CD8-positive, alpha-beta T cell (primary cell): ENCODE measurements at regions of chr3 and their contacts with region 1.

Region 1: GRCh38 chr3:105459566-105460290 is 93.0 kb downstream of the ALCAM start:
- DNase-seq: no peak
- ATAC-seq: no peak
- H3K4me3 ChIP-seq: no peak overlapping the region
- H3K4me3 Mint-ChIP-seq: no peak overlapping the region
- H3K27ac ChIP-seq: no peak overlapping the region
- H3K27ac Mint-ChIP-seq: no peak overlapping the region
- H3K4me1 ChIP-seq: no peaks in the 10 kb centered on the region
- H3K4me1 Mint-ChIP-seq: no peaks in the 10 kb centered on the region
- H3K27me3 ChIP-seq: no peaks in the 10 kb centered on the region
- H3K27me3 Mint-ChIP-seq: no peaks in the 10 kb centered on the region
- CTCF ChIP-seq: no peak

Region 2: GRCh38 chr3:106058475-106058874 is 598.7 kb after region 1 on chr3:
- CTCF ChIA-PET with region 1: no interaction called
- POLR2A ChIA-PET with region 1: no interaction called
- intact Hi-C with region 1: loop called in 1 of 2 experiments (anchors 5 kb)
- DNase-seq: no peak
- ATAC-seq: no peak
- H3K4me3 ChIP-seq: no peak overlapping the region
- H3K4me3 Mint-ChIP-seq: no peak overlapping the region
- H3K27ac ChIP-seq: no peak overlapping the region
- H3K27ac Mint-ChIP-seq: no peak overlapping the region
- H3K4me1 ChIP-seq: no peaks in the 10 kb centered on the region
- H3K4me1 Mint-ChIP-seq: peaks cover 7% of the 10 kb centered on the region
- H3K27me3 ChIP-seq: no peaks in the 10 kb centered on the region
- H3K27me3 Mint-ChIP-seq: no peaks in the 10 kb centered on the region
- CTCF ChIP-seq: no peak